ENCODE measurements at regions of chr21 and their contacts with region 1.

Region 1: DNA sequence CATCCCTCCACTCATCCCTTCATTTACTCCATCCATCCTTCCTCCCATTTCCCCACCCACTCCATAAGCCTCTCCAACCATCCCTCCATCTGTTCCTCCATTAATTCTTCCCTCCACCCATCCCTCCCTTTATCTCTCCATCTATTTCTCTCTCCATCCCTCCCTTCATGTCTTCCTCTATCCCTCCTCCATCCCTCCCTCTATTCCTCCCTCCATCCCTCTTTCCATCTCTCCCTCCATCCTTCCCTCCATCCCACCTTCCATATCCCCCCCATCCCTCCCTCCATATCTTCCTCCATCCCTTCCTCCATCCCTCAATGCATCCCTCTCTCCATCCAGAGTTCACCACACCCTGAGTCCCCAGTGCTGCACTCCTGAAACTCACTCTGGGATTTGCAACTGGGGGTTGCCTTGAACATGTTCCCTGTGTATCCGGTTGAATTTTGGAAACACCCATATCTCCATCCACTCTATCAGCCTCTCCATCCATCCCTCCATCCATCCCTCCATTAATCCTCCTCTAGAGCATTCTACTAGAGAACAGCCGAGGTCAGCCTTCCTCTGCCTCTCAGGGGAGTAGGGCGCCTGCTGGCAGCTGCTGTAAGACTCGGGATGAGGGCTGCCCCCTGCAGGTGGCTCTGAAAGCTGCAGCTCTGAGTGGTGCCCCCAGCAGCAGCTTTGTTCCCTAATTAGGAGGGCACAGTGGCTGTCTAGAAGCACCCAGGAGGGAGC is 39.4 kb downstream of the ABCG1 start:
- DNase-seq: peak; percentile 90

Region 2: GRCh38 chr21:42238185-42238934 is 20.0 kb before region 1 on chr21:
- intact Hi-C with region 1: loop called in 1 of 2 experiments (anchors 1 kb)
- DNase-seq: peak; percentile 16

Region 3: GRCh38 chr21:42289926-42290325 is 31.6 kb after region 1 on chr21:
- intact Hi-C with region 1: no loop called
- DNase-seq: peak; percentile 85